K562 (cell line): ENCODE measurements at regions of chr3 and their contacts with region 1.

Region 1: DNA sequence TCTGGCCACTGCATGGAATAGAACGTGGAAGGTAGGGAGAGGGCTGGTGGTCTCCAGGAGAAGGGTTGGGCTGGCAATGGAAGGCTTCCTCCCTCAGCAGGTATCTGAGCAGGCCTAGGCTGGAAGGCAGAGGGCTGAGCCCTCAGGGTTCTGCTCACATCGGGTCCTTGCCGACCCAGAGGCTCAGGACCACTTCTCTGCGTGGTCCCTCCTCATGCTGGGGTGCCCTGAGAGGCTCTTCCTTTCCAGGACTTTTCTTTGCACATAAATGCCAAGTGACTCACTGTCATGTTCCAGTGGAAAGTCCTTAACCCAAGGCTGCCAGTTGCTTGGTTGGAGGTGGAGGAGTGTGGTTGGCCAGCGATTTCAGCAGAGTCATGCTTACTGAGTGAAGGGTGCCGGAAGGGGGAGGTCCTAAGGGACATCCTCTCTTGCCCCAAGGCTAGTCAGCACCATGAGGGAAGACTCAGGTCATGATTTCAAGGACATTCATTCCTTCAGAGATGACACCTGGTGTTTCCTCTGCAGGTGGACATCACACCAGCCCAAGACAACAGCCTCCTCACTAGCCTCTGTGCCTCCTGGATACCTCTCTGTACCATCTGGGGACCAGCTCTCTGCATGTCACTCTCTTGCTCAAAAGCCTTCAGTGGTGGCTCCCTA is 8.2 kb downstream of the SLC6A6 start:
- DNase-seq: peak; percentile 86 to 97 (median 91)
- ATAC-seq: peak; percentile 95
- H3K4me3 ChIP-seq: 0 out of 2 replicates have a peak overlapping the region, but pooled peaks have one; percentile 3
- H3K27ac ChIP-seq: peak overlapping the region; percentile 100
- H3K4me1 ChIP-seq: peaks cover 64 to 73% of the 10 kb centered on the region in 2 experiments
- H3K27me3 ChIP-seq: no peaks in the 10 kb centered on the region
- CTCF ChIP-seq: no peak; a peak in 1 of 6 replicates
- EP300 ChIP-seq: peak; percentile 92
- POLR2A ChIP-seq: peak; percentile 89
- RAD21 ChIP-seq: 0 out of 4 replicates have a peak, but pooled peaks of 1 of the 2 experiments have one; percentile 5

Region 2: GRCh38 chr3:14216257-14217048 is 194.2 kb before region 1 on chr3:
- CTCF ChIA-PET with region 1: no interaction called
- POLR2A ChIA-PET with region 1: no interaction called
- in situ Hi-C with region 1: no loop called
- intact Hi-C with region 1: no loop called
- DNase-seq: peak in 1 of 4 experiments; percentile 50
- ATAC-seq: peak; percentile 79
- H3K4me3 ChIP-seq: no peak overlapping the region
- H3K27ac ChIP-seq: no peak overlapping the region
- H3K4me1 ChIP-seq: peaks cover 8 to 9% of the 10 kb centered on the region in 2 experiments
- H3K27me3 ChIP-seq: no peaks in the 10 kb centered on the region
- CTCF ChIP-seq: peak; percentile 50 to 70 (median 66)
- EP300 ChIP-seq: no peak
- POLR2A ChIP-seq: no peak
- RAD21 ChIP-seq: no peak

Region 3: GRCh38 chr3:14426063-14426620 is 15.5 kb after region 1 on chr3:
- CTCF ChIA-PET with region 1: no interaction called
- POLR2A ChIA-PET with region 1: interaction called, 34 read pairs
- in situ Hi-C with region 1: no loop called
- intact Hi-C with region 1: no loop called
- DNase-seq: no peak
- ATAC-seq: peak; percentile 24; the same call in 1 of the 3 replicates
- H3K4me3 ChIP-seq: no peak overlapping the region
- H3K27ac ChIP-seq: peak overlapping the region; percentile 8; the same call in 2 of the 3 replicates
- H3K4me1 ChIP-seq: peaks cover 33 to 52% of the 10 kb centered on the region in 2 experiments
- H3K27me3 ChIP-seq: no peaks in the 10 kb centered on the region
- CTCF ChIP-seq: 0 out of 6 replicates have a peak, but pooled peaks of 1 of the 3 experiments have one; percentile 12
- EP300 ChIP-seq: no peak
- POLR2A ChIP-seq: no peak
- RAD21 ChIP-seq: no peak

Region 4: DNA sequence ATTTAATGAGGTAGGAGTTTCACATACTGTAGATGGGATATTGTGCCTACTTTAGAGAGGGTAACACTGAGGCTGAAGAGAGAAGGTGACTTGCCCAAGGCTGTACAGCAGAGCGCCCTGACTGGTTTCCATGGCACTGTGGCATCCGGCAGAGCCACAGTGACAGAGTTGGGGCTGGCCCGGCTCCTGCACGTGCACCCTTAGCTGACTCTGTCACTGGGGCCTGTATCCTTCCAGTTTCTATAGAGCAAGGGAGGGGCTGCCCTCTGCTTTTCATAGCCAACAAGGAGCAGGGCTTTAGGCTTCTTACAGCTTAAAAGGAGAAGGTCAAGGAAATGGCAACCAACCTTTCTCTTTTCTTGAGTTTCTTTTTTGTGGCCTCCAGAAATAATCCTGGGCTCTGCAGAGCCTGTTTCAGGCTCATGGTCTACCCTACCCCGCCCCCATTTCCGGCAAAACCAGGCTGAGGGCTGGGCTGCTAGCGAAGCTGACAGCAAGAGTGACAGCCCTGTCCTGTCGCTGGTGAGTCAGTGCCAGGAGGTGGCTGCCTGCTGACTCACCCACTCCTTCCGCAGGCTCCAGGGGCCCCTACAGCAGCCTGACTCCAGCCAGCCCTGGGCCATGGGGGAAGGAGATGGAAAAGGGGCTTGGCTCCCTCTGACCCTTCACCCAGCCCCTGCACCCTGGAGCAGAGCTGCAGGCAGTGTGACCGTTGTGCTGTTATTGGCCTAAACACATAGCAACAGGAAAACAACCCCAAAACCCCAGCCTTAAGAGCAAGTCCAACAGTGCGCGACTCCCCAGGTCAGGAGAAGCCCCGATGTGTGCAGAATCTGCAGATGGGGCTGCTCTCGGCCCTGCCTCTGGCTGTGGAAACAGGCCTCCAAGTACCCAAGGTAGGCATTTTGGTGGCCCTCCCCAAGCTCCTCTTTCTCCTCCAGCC is 21.5 kb after region 1 on chr3:
- CTCF ChIA-PET with region 1: no interaction called
- POLR2A ChIA-PET with region 1: interaction called, 34 read pairs
- in situ Hi-C with region 1: no loop called
- intact Hi-C with region 1: loop called (anchors 1 kb)
- DNase-seq: peak; percentile 94 to 97 (median 96)
- ATAC-seq: peak; percentile 97
- H3K4me3 ChIP-seq: peak overlapping the region; percentile 7; the same call in 1 of the 2 replicates
- H3K27ac ChIP-seq: peak overlapping the region; percentile 80
- H3K4me1 ChIP-seq: peaks cover 47 to 63% of the 10 kb centered on the region in 2 experiments
- H3K27me3 ChIP-seq: no peaks in the 10 kb centered on the region
- CTCF ChIP-seq: no peak
- EP300 ChIP-seq: peak; percentile 78; the same call in 1 of the 2 replicates
- POLR2A ChIP-seq: peak; percentile 14; the same call in 1 of the 2 replicates
- RAD21 ChIP-seq: peak in 1 of 2 experiments; percentile 14; a peak in 2 of 4 replicates